ENCODE measurements at regions of chr10 and their contacts with region 1.

Region 1: GRCh38 chr10:102225646-102226541 is at the start of gene ELOVL3:
- DNase-seq: peak; percentile 57
- H3K4me3 ChIP-seq: peak within 1 kb of the TSS in 3 of 4 donors; percentile 18 to 50 (median 22)
- H3K27ac ChIP-seq: peak within 1 kb of the TSS; percentile 42 to 74 (median 56)
- H3K4me1 ChIP-seq: peaks cover 14 to 36% (median 21%) of the 10 kb centered on the region in 3 donors
- H3K27me3 ChIP-seq: peaks cover 0 to 41% (median under 1%) of the 10 kb centered on the region in 4 donors
- CTCF ChIP-seq: peak in 3 of 6 experiments; percentile 13 to 24 (median 14)
- POLR2A ChIP-seq: peak in 1 of 4 donors; percentile 11
- total RNA-seq, gene ELOVL3: not detected

Region 2: DNA sequence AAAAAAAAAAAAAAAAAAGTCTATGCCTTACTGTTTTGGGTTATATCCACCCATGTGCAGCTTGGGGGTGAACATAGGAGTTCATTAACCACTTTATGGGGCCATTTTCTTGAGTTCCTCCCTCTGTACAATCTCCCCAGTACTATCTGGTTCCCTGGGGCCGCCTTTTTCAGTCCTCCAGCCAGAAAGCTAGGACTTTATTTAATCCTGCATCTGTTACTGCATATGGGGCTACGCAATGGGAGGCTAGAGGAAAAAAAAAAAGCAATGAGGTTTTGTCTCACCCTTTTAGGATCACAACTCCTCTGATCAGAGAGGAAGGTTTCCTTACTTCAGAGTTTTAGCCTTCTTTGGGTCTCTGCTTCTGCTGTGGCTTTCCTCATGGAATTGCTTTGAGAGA is 820.9 kb before region 1 on chr10:
- intact Hi-C with region 1: no loop called
- DNase-seq: no peak
- H3K4me3 ChIP-seq: no peak overlapping the region
- H3K27ac ChIP-seq: no peak overlapping the region
- H3K4me1 ChIP-seq: no peaks in the 10 kb centered on the region
- H3K27me3 ChIP-seq: no peaks in the 10 kb centered on the region
- CTCF ChIP-seq: no peak
- POLR2A ChIP-seq: no peak

Region 3: GRCh38 chr10:102175415-102175814 is 50.5 kb before region 1 on chr10:
- intact Hi-C with region 1: loop called (anchors 10 kb)
- DNase-seq: no peak
- H3K4me3 ChIP-seq: no peak overlapping the region
- H3K27ac ChIP-seq: no peak overlapping the region
- H3K4me1 ChIP-seq: no peaks in the 10 kb centered on the region
- H3K27me3 ChIP-seq: peaks cover 0 to 26% (median 0%) of the 10 kb centered on the region in 4 donors
- CTCF ChIP-seq: no peak
- POLR2A ChIP-seq: no peak

Region 4: GRCh38 chr10:102352066-102352715 is 126.3 kb after region 1 on chr10:
- intact Hi-C with region 1: loop called (anchors 5 kb)
- DNase-seq: no peak
- H3K4me3 ChIP-seq: no peak overlapping the region
- H3K27ac ChIP-seq: no peak overlapping the region
- H3K4me1 ChIP-seq: no peaks in the 10 kb centered on the region
- H3K27me3 ChIP-seq: no peaks in the 10 kb centered on the region
- CTCF ChIP-seq: peak; percentile 80 to 92 (median 84)
- POLR2A ChIP-seq: no peak